ENCODE measurements at regions of chr15 and their contacts with region 1.

Region 1: DNA sequence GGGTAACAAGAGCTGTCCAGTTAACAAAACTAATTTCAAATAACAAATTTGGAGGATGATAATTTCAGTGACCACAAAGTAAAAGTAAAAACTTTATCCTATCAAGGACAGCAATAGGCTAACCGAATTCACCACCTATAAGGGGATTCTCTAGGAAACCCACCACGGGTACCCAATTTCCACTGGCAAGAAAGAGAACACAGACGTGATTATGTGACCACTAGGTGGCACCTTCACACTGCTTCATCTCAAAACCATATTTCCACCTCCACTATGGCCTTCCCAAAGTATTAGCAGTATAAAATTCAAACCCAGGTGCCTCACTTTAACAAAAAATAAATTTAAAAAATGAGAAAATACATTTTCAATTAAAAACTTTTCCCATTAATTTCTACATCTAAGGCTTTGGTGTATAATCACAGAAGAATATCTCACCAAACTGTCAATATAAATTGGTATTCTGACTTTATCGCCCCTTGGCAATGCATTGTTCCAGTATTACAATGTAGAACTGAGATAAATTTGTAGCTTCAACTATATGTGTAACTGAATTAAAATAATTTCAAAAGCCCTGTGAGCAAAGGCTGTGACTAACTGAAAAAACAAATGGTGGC is 96.5 kb downstream of the FSIP1 start:
- DNase-seq: no peak
- ATAC-seq: no peak
- H3K4me3 Mint-ChIP-seq: no peak overlapping the region
- H3K27ac Mint-ChIP-seq: no peak overlapping the region
- H3K4me1 Mint-ChIP-seq: no peaks in the 10 kb centered on the region
- H3K27me3 Mint-ChIP-seq: no peaks in the 10 kb centered on the region
- CTCF ChIP-seq: no peak

Region 2: GRCh38 chr15:39874890-39875549 is 188.9 kb after region 1 on chr15:
- CTCF ChIA-PET with region 1: no interaction called
- POLR2A ChIA-PET with region 1: no interaction called
- intact Hi-C with region 1: loop called (anchors 1 kb)
- DNase-seq: no peak
- ATAC-seq: no peak
- H3K4me3 Mint-ChIP-seq: no peak overlapping the region
- H3K27ac Mint-ChIP-seq: no peak overlapping the region
- H3K4me1 Mint-ChIP-seq: no peaks in the 10 kb centered on the region
- H3K27me3 Mint-ChIP-seq: peaks cover under 1% of the 10 kb centered on the region
- CTCF ChIP-seq: no peak

Measured in activated B cell treated with CpG ODN at 0.5 μM for 24 hours (primary cell).